ENCODE measurements at regions of chr17 and their contacts with region 1.

Region 1: DNA sequence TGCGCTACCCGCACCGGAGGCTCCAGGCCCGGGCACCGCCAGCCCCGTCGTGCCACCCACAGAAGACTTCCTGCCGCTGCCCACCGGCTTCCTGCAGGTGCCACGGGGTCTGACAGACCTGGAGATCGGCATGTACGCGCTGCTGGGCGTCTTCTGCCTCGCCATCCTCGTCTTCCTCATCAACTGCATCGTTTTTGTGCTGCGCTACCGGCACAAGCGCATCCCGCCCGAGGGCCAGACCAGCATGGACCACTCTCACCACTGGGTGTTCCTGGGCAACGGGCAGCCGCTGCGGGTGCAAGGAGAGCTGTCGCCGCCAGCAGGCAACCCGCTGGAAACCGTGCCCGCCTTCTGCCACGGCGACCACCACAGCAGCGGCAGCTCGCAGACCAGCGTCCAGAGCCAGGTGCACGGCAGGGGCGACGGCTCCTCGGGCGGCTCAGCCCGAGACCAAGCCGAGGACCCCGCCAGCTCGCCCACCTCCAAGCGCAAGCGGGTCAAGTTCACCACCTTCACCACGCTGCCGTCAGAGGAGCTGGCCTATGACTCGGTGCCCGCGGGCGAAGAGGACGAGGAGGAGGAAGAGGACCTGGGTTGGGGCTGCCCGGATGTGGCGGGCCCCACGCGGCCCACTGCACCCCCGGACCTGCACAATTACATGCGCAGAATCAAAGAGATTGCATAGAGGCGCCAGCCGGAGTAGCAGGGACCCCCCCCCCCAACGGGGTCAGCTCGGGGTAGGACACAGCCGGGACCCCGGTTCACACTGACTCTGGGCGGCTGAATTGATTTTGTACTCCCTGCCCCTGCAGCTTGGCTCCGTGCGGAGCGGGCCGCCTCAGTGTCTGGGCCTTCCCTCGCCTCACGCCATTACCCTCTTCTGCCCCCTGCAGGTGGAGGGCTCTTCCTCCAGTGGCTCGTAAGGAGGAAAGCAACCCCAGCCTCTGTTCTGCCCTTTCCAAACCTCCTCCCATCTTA is 58.5 kb downstream of the TMEM132E start:
- DNase-seq: peak; percentile 89
- ATAC-seq: peak; percentile 97
- H3K4me3 Mint-ChIP-seq: peak overlapping the region; percentile 66
- H3K27ac Mint-ChIP-seq: no peak overlapping the region
- H3K4me1 Mint-ChIP-seq: peaks cover 5% of the 10 kb centered on the region
- H3K27me3 Mint-ChIP-seq: peaks cover 3% of the 10 kb centered on the region
- CTCF ChIP-seq: peak; percentile 86

Region 2: GRCh38 chr17:34420254-34420766 is 217.5 kb before region 1 on chr17:
- CTCF ChIA-PET with region 1: interaction called, 13 read pairs
- POLR2A ChIA-PET with region 1: no interaction called
- intact Hi-C with region 1: no loop called
- DNase-seq: peak; percentile 76
- ATAC-seq: peak; percentile 37
- H3K4me3 Mint-ChIP-seq: no peak overlapping the region
- H3K27ac Mint-ChIP-seq: no peak overlapping the region
- H3K4me1 Mint-ChIP-seq: peaks cover 2% of the 10 kb centered on the region
- H3K27me3 Mint-ChIP-seq: peaks cover 30% of the 10 kb centered on the region
- CTCF ChIP-seq: peak; percentile 95

Region 3: GRCh38 chr17:34542700-34543336 is 95.0 kb before region 1 on chr17:
- CTCF ChIA-PET with region 1: interaction called, 39 read pairs
- POLR2A ChIA-PET with region 1: no interaction called
- intact Hi-C with region 1: loop called (anchors 2 kb)
- DNase-seq: peak; percentile 73
- ATAC-seq: peak; percentile 66
- H3K4me3 Mint-ChIP-seq: no peak overlapping the region
- H3K27ac Mint-ChIP-seq: no peak overlapping the region
- H3K4me1 Mint-ChIP-seq: no peaks in the 10 kb centered on the region
- H3K27me3 Mint-ChIP-seq: peaks cover 22% of the 10 kb centered on the region
- CTCF ChIP-seq: peak; percentile 99

Region 4: DNA sequence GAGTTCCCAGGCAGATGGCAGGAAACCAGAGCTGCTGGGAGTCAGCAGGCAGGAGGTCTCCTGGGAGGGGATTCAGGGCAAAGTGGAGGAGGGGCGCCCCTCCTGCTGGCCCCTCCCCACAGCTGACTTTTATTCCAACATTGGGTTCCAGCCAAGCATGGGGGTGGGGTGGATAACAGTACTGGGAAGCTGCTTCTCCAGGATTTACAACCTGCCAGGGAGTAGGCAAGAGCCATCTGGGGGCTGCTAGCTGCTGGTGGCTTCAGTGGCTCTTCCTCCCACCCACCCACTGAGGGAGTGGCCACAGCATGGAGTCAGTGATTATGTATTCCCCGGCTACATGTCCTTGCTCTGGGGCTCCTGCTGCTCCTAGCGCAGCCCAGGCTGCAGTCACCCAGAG is 21.7 kb before region 1 on chr17:
- CTCF ChIA-PET with region 1: interaction called, 10 read pairs
- POLR2A ChIA-PET with region 1: no interaction called
- intact Hi-C with region 1: no loop called
- DNase-seq: no peak
- ATAC-seq: no peak
- H3K4me3 Mint-ChIP-seq: no peak overlapping the region
- H3K27ac Mint-ChIP-seq: no peak overlapping the region
- H3K4me1 Mint-ChIP-seq: no peaks in the 10 kb centered on the region
- H3K27me3 Mint-ChIP-seq: peaks cover 27% of the 10 kb centered on the region
- CTCF ChIP-seq: no peak

Region 5: DNA sequence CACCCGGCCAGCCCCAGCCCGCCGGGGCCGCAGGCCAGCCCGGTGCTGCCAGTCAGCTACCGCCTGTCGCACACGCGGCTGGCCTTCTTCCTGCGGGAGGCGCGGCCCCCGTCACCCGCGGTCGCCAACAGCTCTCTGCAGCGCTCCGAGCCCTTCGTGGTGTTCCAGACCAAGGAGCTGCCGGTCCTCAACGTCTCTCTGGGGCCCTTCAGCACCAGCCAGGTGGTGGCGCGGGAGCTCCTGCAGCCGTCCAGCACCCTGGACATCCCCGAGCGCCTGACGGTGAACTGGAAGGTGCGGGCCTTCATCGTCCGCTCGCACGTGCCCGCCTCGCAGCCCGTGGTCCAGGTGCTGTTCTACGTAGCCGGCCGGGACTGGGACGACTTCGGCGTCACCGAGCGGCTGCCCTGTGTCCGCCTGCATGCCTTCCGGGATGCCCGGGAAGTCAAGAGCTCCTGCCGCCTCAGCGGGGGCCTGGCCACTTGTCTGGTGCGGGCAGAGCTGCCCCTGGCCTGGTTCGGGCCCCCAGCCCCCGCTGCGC is 11.6 kb before region 1 on chr17:
- CTCF ChIA-PET with region 1: interaction called, 32 read pairs
- POLR2A ChIA-PET with region 1: no interaction called
- intact Hi-C with region 1: no loop called
- DNase-seq: no peak
- ATAC-seq: peak; percentile 30
- H3K4me3 Mint-ChIP-seq: no peak overlapping the region
- H3K27ac Mint-ChIP-seq: no peak overlapping the region
- H3K4me1 Mint-ChIP-seq: no peaks in the 10 kb centered on the region
- H3K27me3 Mint-ChIP-seq: peaks cover 49% of the 10 kb centered on the region
- CTCF ChIP-seq: no peak

Region 6: DNA sequence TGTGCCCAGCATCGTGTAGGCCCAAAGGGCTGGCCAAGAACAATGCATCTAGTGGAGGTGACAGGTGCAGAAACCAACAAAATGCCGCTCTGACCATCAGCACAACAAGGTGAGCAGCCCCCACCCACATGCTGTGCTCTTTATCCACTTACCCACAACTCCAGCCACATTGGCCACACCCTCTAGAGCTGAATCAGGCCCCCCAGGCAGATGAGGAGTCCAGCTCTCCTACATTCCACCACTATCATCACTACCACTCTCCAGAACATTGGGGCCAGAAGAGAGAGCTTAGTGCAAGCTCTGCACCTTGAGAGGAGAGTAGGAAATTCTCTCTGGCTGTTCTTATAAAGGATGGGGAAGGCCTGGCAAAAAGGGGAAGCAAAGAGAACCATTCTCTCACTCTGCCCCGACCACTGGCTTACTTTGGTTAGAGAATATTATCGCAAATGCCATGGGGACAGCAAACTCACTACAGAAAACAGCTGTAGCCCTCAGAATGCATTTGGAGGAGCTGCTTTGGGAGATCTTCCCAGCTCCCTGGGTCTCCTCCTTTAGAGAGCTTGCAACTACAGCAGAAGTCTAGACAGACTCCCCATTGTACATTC is 16.5 kb after region 1 on chr17:
- CTCF ChIA-PET with region 1: interaction called, 12 read pairs
- POLR2A ChIA-PET with region 1: no interaction called
- intact Hi-C with region 1: no loop called
- DNase-seq: no peak
- ATAC-seq: no peak
- H3K4me3 Mint-ChIP-seq: no peak overlapping the region
- H3K27ac Mint-ChIP-seq: no peak overlapping the region
- H3K4me1 Mint-ChIP-seq: no peaks in the 10 kb centered on the region
- H3K27me3 Mint-ChIP-seq: peaks cover 15% of the 10 kb centered on the region
- CTCF ChIP-seq: no peak